SK-N-SH (cell line): ENCODE measurements at regions of chr6 and their contacts with region 1.

Region 1: GRCh38 chr6:41424370-41425058 is 89.1 kb downstream of the NCR2 start:
- DNase-seq: peak; percentile 84
- H3K4me3 ChIP-seq: no peak overlapping the region
- H3K27ac ChIP-seq: no peak overlapping the region
- H3K4me1 ChIP-seq: peaks cover 0 to 17% of the 10 kb centered on the region in 2 experiments; a peak in 1 of 4 replicates
- H3K27me3 ChIP-seq: peaks cover 48% of the 10 kb centered on the region
- CTCF ChIP-seq: peak; percentile 85
- EP300 ChIP-seq: no peak
- RAD21 ChIP-seq: peak; percentile 76

Region 2: GRCh38 chr6:41404182-41404845 is 20.2 kb before region 1 on chr6:
- CTCF ChIA-PET with region 1: interaction called, 52 read pairs
- POLR2A ChIA-PET with region 1: no interaction called
- DNase-seq: no peak
- H3K4me3 ChIP-seq: no peak overlapping the region
- H3K27ac ChIP-seq: no peak overlapping the region
- H3K4me1 ChIP-seq: no peaks in the 10 kb centered on the region; a peak in 1 of 4 replicates
- H3K27me3 ChIP-seq: peaks cover 23% of the 10 kb centered on the region
- CTCF ChIP-seq: no peak
- EP300 ChIP-seq: no peak
- RAD21 ChIP-seq: no peak

Region 3: GRCh38 chr6:41449399-41450245 is 25.1 kb after region 1 on chr6:
- CTCF ChIA-PET with region 1: interaction called, 27 read pairs
- POLR2A ChIA-PET with region 1: no interaction called
- DNase-seq: no peak
- H3K4me3 ChIP-seq: no peak overlapping the region
- H3K27ac ChIP-seq: no peak overlapping the region; a peak in 1 of 4 replicates
- H3K4me1 ChIP-seq: peaks cover 0 to 20% of the 10 kb centered on the region in 2 experiments; a peak in 1 of 4 replicates
- H3K27me3 ChIP-seq: peaks cover 4% of the 10 kb centered on the region; the same call in 1 of the 2 replicates
- CTCF ChIP-seq: no peak
- EP300 ChIP-seq: no peak
- RAD21 ChIP-seq: no peak

Region 4: DNA sequence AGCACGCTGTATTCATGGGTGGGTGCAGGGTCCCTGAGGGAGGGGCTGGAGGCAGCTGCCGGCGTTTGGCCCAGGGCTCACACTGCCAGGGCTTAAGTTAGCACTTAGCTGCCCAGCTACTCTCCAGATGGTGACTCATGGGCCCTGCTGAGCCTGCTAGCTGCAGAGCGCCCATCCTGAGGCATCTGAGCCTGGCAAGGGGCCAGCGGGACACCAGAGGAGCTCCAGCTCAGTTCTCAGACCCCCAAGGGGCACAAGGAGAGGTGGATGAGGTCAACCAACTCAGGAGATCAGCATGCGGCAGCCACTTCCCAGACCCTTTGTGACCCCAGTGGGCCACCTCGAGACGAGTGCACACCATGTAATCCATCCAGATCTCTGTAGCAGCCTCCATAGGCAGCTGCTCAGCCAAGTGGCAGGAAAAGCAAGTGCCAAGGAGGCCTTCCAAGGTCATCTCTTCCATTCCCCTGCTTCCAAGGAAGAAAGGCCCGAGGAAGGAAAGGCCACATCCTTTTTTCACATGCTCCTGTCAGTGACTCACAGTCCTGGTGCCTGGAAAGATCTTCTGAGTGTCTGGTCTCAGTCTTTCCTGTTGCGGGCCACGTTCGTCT is 157.0 kb after region 1 on chr6:
- CTCF ChIA-PET with region 1: interaction called, 38 read pairs
- POLR2A ChIA-PET with region 1: no interaction called
- DNase-seq: peak; percentile 63
- H3K4me3 ChIP-seq: 0 out of 4 replicates have a peak overlapping the region, but pooled peaks of 1 of the 2 experiments have one; percentile 1
- H3K27ac ChIP-seq: peak overlapping the region; percentile 60 to 93
- H3K4me1 ChIP-seq: peaks cover 30 to 49% of the 10 kb centered on the region in 2 experiments; a peak in 3 of 4 replicates
- H3K27me3 ChIP-seq: no peaks in the 10 kb centered on the region
- CTCF ChIP-seq: no peak
- EP300 ChIP-seq: peak in 1 of 2 experiments; percentile 61; a peak in 1 of 4 replicates
- RAD21 ChIP-seq: no peak

Region 5: DNA sequence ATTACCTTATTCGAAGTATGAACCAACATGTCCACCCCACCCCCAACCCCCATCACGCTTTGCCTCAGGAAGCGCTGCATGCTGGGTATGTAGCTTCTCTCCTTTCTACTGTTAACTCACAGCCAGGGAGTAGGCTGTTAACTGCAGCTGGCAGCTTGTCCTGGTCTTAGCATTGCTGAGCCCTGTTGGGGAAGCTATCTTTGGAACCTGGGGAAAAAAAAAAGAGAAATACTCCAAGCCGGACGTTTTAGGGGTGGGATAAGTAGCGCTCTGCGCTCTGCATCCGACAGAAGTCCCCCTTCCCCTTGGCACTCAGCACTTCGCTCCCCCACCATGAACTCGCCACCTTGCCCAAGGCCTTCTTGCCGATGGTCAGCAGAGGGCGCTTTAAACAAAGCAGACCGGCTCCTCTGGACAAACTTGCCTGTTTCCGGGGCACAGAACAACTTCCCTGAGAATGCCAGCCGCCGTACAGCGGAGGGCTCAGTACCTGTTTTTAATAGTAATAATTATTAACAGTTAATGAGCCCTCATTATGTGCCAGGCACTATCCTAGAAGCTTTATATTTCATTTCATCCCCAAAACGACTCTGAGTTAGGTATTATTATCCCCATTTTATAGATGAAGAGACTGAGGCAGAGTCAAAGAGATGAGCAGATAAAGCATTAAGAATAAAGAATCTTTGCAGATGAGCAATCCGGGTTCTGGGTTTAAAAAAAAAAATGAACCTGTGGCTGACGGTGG is 178.5 kb after region 1 on chr6:
- CTCF ChIA-PET with region 1: interaction called, 24 read pairs
- POLR2A ChIA-PET with region 1: no interaction called
- DNase-seq: peak; percentile 90
- H3K4me3 ChIP-seq: peak overlapping the region; percentile 17 to 54; a peak in 3 of 4 replicates
- H3K27ac ChIP-seq: peak overlapping the region; percentile 3 to 36; a peak in 1 of 4 replicates
- H3K4me1 ChIP-seq: peaks cover 0 to 7% of the 10 kb centered on the region in 2 experiments; a peak in 1 of 4 replicates
- H3K27me3 ChIP-seq: no peaks in the 10 kb centered on the region
- CTCF ChIP-seq: peak; percentile 95
- EP300 ChIP-seq: no peak
- RAD21 ChIP-seq: peak; percentile 93